ENCODE measurements at regions of chr6 and their contacts with region 1.

Region 1: DNA sequence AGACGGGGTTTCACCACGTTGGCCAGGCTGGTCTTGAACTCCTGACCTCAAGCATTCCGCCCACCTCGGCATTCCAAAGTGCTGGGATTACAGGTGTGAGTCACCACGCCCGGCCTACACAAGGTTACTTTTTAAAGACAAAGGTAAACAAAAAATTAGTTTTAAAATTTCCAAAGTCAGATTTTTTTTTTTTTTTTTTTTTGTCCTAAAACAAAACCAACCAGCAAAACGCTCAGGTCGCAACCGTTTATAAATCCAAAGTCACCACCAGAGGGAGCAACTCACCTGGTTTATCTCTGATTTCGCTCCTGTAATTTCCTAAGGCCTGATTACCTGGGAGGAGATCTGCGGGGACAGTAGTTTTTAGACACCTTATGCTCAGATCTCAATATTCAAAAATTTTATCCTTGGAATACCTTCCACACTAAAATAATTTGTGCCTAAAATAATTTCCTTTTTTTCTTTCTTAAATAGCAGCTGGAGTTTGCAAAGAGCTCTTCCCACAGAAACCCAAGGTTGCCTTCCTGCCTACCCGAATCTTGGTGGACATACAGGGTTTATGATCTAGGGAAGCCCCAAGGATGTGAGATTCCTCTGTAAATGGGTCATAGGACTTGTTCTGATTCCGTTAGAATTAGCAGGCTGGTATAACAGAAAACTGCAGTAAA is 19.8 kb upstream of the TREM1 start:
- DNase-seq: peak; percentile 51
- H3K4me3 Mint-ChIP-seq: no peak overlapping the region
- H3K27ac Mint-ChIP-seq: no peak overlapping the region
- H3K4me1 Mint-ChIP-seq: no peaks in the 10 kb centered on the region
- H3K27me3 Mint-ChIP-seq: peaks cover 6% of the 10 kb centered on the region

Region 2: DNA sequence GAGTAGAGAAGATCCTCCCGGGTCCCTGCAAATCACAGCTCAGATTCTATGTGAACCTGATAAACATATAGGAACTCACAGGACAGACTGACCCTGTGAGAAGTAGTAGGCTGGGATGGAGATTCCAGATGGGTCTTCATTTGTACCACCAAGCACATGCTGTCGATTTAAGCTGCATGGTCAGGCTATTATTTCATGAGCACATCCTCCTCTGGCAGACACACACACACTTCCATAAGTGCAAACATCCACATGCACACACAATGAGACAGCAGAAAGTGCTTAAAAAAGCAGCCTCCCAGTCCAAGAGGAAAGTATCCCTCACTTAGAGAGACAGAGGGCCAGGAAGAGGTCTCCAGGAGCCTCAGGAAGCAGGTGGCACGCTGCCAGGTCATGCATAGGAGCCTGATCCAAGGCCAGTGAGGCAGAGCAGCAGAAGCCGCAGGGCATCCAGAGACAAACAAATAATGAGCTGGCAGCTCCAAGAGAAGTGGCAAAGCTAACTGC is 399.1 kb before region 1 on chr6:
- CTCF ChIA-PET with region 1: no interaction called
- POLR2A ChIA-PET with region 1: no interaction called
- intact Hi-C with region 1: no loop called
- DNase-seq: no peak
- H3K4me3 Mint-ChIP-seq: no peak overlapping the region
- H3K27ac Mint-ChIP-seq: no peak overlapping the region
- H3K4me1 Mint-ChIP-seq: peaks cover 6% of the 10 kb centered on the region
- H3K27me3 Mint-ChIP-seq: peaks cover 10% of the 10 kb centered on the region

Region 3: GRCh38 chr6:41278699-41279405 is 27.5 kb before region 1 on chr6:
- CTCF ChIA-PET with region 1: interaction called, 11 read pairs
- POLR2A ChIA-PET with region 1: interaction called, 3 read pairs
- intact Hi-C with region 1: no loop called
- DNase-seq: peak; percentile 80
- H3K4me3 Mint-ChIP-seq: no peak overlapping the region
- H3K27ac Mint-ChIP-seq: no peak overlapping the region
- H3K4me1 Mint-ChIP-seq: peaks cover 11% of the 10 kb centered on the region
- H3K27me3 Mint-ChIP-seq: peaks cover 6% of the 10 kb centered on the region

Region 4: DNA sequence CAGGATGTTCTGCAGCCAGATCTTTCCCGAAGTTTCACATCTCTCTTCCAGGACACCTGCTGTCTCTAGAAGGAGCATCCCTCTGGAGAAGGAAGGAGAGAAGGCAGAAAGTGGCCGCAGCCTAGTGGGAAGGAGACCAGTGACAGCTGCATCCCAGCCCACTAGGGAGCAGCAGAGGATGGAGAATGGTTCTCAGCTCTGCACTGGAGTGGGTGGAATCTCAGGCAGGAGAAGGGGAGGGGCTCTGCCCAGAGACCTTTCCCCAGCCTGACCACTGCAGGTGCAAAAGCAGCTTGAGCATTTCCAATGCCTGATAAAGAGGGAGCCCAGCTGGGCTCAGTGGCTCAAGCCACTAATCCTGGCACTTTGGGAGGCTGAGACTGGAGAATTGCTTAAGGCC is 61.4 kb after region 1 on chr6:
- CTCF ChIA-PET with region 1: interaction called, 13 read pairs
- POLR2A ChIA-PET with region 1: no interaction called
- intact Hi-C with region 1: loop called (anchors 2 kb)
- DNase-seq: peak; percentile 25
- H3K4me3 Mint-ChIP-seq: no peak overlapping the region
- H3K27ac Mint-ChIP-seq: no peak overlapping the region
- H3K4me1 Mint-ChIP-seq: peaks cover 15% of the 10 kb centered on the region
- H3K27me3 Mint-ChIP-seq: peaks cover 49% of the 10 kb centered on the region

Region 5: DNA sequence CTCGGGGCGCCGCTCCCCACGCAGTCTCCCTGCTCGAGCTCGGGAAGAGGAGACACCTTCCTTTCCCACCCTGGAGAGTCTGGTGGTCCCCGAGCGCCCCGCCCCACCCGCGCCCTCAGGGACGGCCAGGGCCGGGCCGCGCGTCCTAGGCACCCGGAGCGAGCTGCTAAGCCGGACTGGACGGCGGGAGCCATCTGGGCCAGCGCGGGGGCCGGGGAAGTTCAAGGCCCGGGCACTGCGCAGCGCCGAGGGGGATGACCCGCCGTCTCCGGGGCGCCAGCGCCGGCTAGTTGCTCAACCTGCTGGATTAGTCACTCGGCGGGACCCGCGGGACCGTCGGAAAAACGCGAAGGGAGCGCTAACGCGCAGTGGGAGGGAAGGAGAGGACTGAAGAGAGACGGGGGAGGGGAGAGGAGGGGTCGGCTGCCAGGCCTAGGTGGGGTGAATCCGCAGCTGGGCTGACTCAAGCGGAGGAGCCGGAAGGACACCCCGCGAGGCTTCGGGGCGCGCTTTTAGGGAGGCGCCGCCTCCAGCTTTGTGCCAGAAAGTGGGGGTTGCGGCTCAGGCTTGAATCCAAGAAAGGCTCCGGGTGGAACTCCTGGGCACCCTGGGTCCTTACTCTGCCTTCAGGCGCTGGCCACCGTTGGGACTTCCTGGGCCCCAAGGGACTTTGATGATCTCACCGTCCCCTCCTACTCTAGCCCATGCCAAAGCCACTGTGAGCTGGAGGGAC is 164.2 kb after region 1 on chr6:
- CTCF ChIA-PET with region 1: no interaction called
- POLR2A ChIA-PET with region 1: no interaction called
- intact Hi-C with region 1: no loop called
- DNase-seq: peak; percentile 37
- H3K4me3 Mint-ChIP-seq: peak overlapping the region; percentile 60
- H3K27ac Mint-ChIP-seq: no peak overlapping the region
- H3K4me1 Mint-ChIP-seq: peaks cover 7% of the 10 kb centered on the region
- H3K27me3 Mint-ChIP-seq: peaks cover 46% of the 10 kb centered on the region

Measured in activated CD4-positive, alpha-beta memory T cell treated with anti-CD3 and anti-CD28 coated beads for 36 hours (primary cell).